ENCODE measurements at regions of chr17 and their contacts with region 1.

Region 1: GRCh38 chr17:38656959-38657823 is 17.6 kb downstream of the EPOP start:
- DNase-seq: peak; percentile 72

Region 2: GRCh38 chr17:38557836-38558727 is 99.1 kb before region 1 on chr17:
- intact Hi-C with region 1: loop called (anchors 5 to 10 kb)
- DNase-seq: peak; percentile 98

Region 3: GRCh38 chr17:38609280-38610031 is 47.7 kb before region 1 on chr17:
- intact Hi-C with region 1: loop called in 1 of 2 experiments (anchors 5 kb)
- DNase-seq: no peak

Measured in posterior vena cava (tissue), 2 donors.